ENCODE measurements at regions of chr1 and their contacts with region 1.

Region 1: GRCh38 chr1:61453111-61453961 is 271.6 kb downstream of the TM2D1 start:
- DNase-seq: peak; percentile 88
- H3K4me3 ChIP-seq: no peak overlapping the region
- H3K27ac ChIP-seq: peak overlapping the region; percentile 70
- H3K4me1 ChIP-seq: peaks cover 22% of the 10 kb centered on the region
- H3K27me3 ChIP-seq: no peaks in the 10 kb centered on the region
- CTCF ChIP-seq: peak; percentile 88 to 91

Region 2: DNA sequence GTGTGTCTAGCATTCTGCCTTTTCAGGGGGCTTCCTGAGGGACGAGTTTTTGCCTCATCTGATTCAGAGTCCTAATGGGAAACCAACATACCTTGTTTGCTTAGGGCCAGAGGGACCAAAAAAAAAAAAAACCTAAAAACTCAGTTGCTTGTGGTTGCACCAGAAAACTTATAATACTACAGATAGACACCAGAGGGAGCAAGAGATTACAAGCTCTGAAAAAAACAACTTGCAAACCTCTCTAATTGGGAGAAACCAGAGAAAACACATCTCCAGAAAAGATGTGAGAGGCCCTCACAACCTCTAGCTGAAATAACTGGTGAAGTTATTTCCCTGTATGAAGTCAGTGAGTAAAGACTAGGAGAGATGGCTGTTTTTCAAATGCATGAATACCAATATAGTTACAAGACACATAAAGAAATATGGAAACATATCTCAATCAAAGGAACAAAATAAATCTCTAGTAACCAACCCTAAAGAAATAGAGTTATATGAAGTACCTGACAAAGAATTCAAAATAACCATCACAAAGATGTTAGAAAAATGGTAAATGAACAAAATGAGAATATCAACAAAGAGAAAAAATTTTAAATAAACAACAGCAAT is 604.6 kb before region 1 on chr1:
- CTCF ChIA-PET with region 1: no interaction called
- dilution Hi-C with region 1: no loop called
- in situ Hi-C with region 1: no loop called
- intact Hi-C with region 1: loop called (anchors 2 kb)
- DNase-seq: peak; percentile 20
- H3K4me3 ChIP-seq: no peak overlapping the region
- H3K27ac ChIP-seq: no peak overlapping the region
- H3K4me1 ChIP-seq: peaks cover 5% of the 10 kb centered on the region
- H3K27me3 ChIP-seq: no peaks in the 10 kb centered on the region
- CTCF ChIP-seq: peak; percentile 45 to 71

Region 3: GRCh38 chr1:60886793-60887331 is 566.5 kb before region 1 on chr1:
- CTCF ChIA-PET with region 1: no interaction called
- dilution Hi-C with region 1: no loop called
- in situ Hi-C with region 1: no loop called
- intact Hi-C with region 1: no loop called
- DNase-seq: no peak
- H3K4me3 ChIP-seq: no peak overlapping the region
- H3K27ac ChIP-seq: no peak overlapping the region
- H3K4me1 ChIP-seq: no peaks in the 10 kb centered on the region
- H3K27me3 ChIP-seq: peaks cover 2% of the 10 kb centered on the region
- CTCF ChIP-seq: no peak

Region 4: GRCh38 chr1:60978421-60979357 is 474.6 kb before region 1 on chr1:
- CTCF ChIA-PET with region 1: no interaction called
- dilution Hi-C with region 1: no loop called
- in situ Hi-C with region 1: loop called in 1 of 2 experiments (anchors 10 kb)
- intact Hi-C with region 1: loop called (anchors 1 kb)
- DNase-seq: peak; percentile 38
- H3K4me3 ChIP-seq: no peak overlapping the region
- H3K27ac ChIP-seq: no peak overlapping the region
- H3K4me1 ChIP-seq: peaks cover 4% of the 10 kb centered on the region
- H3K27me3 ChIP-seq: no peaks in the 10 kb centered on the region
- CTCF ChIP-seq: peak; percentile 89 to 90

Region 5: GRCh38 chr1:61049850-61050540 is 403.3 kb before region 1 on chr1:
- CTCF ChIA-PET with region 1: no interaction called
- dilution Hi-C with region 1: no loop called
- in situ Hi-C with region 1: loop called in 1 of 2 experiments (anchors 25 kb)
- intact Hi-C with region 1: loop called (anchors 1 kb)
- DNase-seq: peak; percentile 80
- H3K4me3 ChIP-seq: peak overlapping the region; percentile 56 to 72 (median 65)
- H3K27ac ChIP-seq: no peak overlapping the region
- H3K4me1 ChIP-seq: peaks cover 19% of the 10 kb centered on the region
- H3K27me3 ChIP-seq: no peaks in the 10 kb centered on the region
- CTCF ChIP-seq: peak; percentile 91 to 98

Region 6: DNA sequence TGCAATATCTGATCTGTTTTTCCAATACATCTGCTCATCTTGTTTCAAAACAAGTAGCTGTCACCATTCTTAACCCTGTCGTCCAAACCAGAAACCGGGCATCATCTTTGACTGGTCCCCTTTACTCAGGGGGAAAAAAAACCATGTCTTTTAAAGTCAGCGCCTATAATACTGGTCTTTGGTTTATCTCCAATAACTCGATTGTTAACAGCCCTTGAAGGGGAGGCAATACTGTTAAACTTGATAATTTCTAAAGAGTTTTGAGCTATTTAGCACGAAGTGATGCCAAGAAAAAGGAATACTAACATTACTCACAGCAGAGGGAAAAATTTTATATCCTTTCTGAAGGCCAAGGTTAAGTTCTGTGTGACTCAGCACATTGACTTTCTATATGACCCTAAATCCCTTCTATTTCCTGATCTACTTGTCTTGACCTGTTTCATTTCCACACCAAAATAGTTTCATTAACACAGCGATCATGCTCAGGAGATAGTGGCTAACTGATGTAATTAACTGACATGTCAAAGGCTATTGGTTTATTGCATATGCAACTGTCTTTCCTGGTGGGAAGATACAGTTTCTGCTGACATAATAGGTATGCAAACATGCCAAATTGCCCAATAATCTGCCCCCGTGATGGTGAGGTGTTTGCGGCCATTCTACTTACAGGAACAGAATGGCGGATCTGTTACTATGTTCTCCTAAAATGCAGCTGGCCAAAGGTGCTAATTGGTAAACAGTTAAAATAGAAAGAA is 311.9 kb before region 1 on chr1:
- CTCF ChIA-PET with region 1: no interaction called
- dilution Hi-C with region 1: no loop called
- in situ Hi-C with region 1: no loop called
- intact Hi-C with region 1: loop called (anchors 5 kb)
- DNase-seq: peak; percentile 94
- H3K4me3 ChIP-seq: no peak overlapping the region
- H3K27ac ChIP-seq: peak overlapping the region; percentile 77
- H3K4me1 ChIP-seq: peaks cover 42% of the 10 kb centered on the region
- H3K27me3 ChIP-seq: no peaks in the 10 kb centered on the region
- CTCF ChIP-seq: no peak

Region 7: GRCh38 chr1:61293197-61293596 is 160.1 kb before region 1 on chr1:
- CTCF ChIA-PET with region 1: no interaction called
- dilution Hi-C with region 1: no loop called
- in situ Hi-C with region 1: no loop called
- intact Hi-C with region 1: loop called (anchors 1 kb)
- DNase-seq: peak; percentile 87
- H3K4me3 ChIP-seq: no peak overlapping the region
- H3K27ac ChIP-seq: peak overlapping the region; percentile 69
- H3K4me1 ChIP-seq: peaks cover 31% of the 10 kb centered on the region
- H3K27me3 ChIP-seq: no peaks in the 10 kb centered on the region
- CTCF ChIP-seq: no peak

Measured in mammary epithelial cell (primary cell).